ENCODE measurements at regions of chr14 and their contacts with region 1.

Region 1: DNA sequence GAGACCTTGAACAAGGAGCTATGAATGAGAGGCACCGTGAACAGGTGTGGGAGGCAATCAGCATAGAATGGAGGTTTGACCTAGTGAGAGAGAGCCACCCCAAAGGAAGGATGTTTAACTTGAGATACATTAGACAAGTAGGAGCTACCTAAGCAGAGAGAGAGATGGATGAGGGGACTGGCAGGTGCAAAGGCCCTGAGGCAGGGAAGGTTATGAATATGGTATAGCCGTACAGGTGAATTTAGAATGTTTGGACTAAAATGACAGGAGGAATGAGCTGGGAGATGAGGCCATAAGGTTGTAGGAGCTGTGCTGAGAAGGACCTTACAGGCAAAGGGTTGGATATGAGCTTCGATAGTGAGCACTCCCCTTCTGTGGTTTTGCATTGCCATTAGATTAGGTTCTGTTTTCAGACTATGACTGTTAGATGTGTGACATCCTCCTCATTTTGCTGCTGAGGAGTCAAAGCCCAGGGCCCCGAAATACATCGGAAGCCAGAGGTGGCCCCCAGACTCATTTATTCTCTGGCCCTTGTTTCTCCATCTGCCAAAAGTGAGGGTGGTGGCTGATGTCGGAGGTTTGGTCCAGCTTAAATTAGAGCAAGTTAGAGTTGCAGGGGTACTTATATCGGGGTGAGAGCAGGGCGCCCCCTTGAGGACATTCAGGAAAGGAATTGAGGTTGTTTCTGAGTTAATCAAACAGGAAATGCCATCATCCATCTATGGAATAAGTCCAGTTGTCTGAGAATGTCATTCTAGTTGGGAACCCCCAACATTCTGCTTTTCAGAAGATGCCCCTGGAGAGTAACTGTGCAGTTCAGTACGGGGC is 29.4 kb downstream of the SLC24A4 start:
- DNase-seq: peak; percentile 70
- H3K4me3 Mint-ChIP-seq: no peak overlapping the region
- H3K27ac Mint-ChIP-seq: no peak overlapping the region
- H3K4me1 Mint-ChIP-seq: no peaks in the 10 kb centered on the region
- H3K27me3 Mint-ChIP-seq: peaks cover 3% of the 10 kb centered on the region

Region 2: GRCh38 chr14:92093320-92093719 is 259.1 kb before region 1 on chr14:
- CTCF ChIA-PET with region 1: no interaction called
- intact Hi-C with region 1: loop called (anchors 1 kb)
- DNase-seq: peak; percentile 36
- H3K4me3 Mint-ChIP-seq: no peak overlapping the region
- H3K27ac Mint-ChIP-seq: no peak overlapping the region
- H3K4me1 Mint-ChIP-seq: no peaks in the 10 kb centered on the region
- H3K27me3 Mint-ChIP-seq: no peaks in the 10 kb centered on the region

Region 3: GRCh38 chr14:92224358-92224954 is 127.9 kb before region 1 on chr14:
- CTCF ChIA-PET with region 1: no interaction called
- intact Hi-C with region 1: no loop called
- DNase-seq: no peak
- H3K4me3 Mint-ChIP-seq: no peak overlapping the region
- H3K27ac Mint-ChIP-seq: no peak overlapping the region
- H3K4me1 Mint-ChIP-seq: no peaks in the 10 kb centered on the region
- H3K27me3 Mint-ChIP-seq: no peaks in the 10 kb centered on the region

Region 4: GRCh38 chr14:92706406-92706805 is 354.0 kb after region 1 on chr14:
- CTCF ChIA-PET with region 1: no interaction called
- intact Hi-C with region 1: no loop called
- DNase-seq: no peak
- H3K4me3 Mint-ChIP-seq: no peak overlapping the region
- H3K27ac Mint-ChIP-seq: no peak overlapping the region
- H3K4me1 Mint-ChIP-seq: no peaks in the 10 kb centered on the region
- H3K27me3 Mint-ChIP-seq: no peaks in the 10 kb centered on the region

Measured in activated naive CD4-positive, alpha-beta T cell treated with anti-CD3 and anti-CD28 coated beads for 36 hours (primary cell).